ENCODE measurements at regions of chr19 and their contacts with region 1.

Region 1: GRCh38 chr19:18985257-18985656 is 44.2 kb upstream of the HOMER3 start:
- DNase-seq: no peak
- H3K4me3 Mint-ChIP-seq: no peak overlapping the region
- H3K27ac Mint-ChIP-seq: no peak overlapping the region
- H3K4me1 Mint-ChIP-seq: no peaks in the 10 kb centered on the region
- H3K27me3 Mint-ChIP-seq: no peaks in the 10 kb centered on the region
- CTCF ChIP-seq: no peak

Region 2: DNA sequence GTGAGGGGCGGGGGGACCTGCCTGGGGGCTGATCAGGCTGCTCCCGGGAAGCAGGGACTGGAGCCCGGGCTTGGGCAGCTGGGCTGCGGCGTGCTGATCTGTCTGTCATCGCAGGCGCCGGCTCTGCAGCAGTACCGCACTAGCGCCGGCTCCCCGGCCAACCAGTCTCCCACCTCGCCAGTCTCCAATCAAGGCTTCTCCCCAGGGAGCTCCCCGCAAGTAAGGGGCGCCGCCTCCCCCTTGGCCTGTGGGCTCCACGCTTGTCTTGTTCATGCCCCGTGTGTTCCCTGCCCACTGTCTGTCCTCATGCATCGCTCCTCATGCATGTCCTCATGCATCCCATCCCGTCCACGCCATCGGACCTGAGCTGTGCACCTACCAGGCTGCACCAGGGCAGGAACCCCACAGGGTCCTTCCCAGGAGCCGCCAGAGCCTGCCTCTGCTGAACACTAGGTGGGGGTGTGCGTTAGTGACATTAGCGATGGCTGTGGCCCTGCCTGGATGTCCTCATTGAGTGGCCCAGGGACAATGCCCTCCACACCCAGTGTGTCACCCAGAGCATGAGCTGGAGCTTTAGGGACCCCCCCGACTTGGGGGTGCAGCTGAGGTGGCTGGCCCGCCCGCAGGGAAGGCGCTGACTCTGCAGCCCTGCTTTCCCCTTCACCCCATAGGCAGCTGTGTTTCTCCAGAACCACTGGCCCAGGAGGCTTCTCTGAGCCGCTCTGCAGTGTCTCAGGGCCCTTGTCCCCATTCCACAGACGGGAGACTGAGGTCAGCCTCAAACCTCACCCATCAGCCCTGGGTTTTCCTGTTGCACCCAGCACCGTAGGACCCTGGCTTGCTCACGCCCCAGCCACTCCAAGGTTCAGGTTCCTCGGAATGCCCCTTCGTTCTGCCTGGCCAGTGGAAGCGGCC is 213.7 kb before region 1 on chr19:
- CTCF ChIA-PET with region 1: interaction called, 13 read pairs
- POLR2A ChIA-PET with region 1: no interaction called
- intact Hi-C with region 1: loop called (anchors 2 kb)
- DNase-seq: no peak
- H3K4me3 Mint-ChIP-seq: no peak overlapping the region
- H3K27ac Mint-ChIP-seq: no peak overlapping the region
- H3K4me1 Mint-ChIP-seq: peaks cover 38% of the 10 kb centered on the region
- H3K27me3 Mint-ChIP-seq: no peaks in the 10 kb centered on the region
- CTCF ChIP-seq: no peak

Region 3: GRCh38 chr19:18781885-18782527 is 203.3 kb before region 1 on chr19:
- CTCF ChIA-PET with region 1: no interaction called
- POLR2A ChIA-PET with region 1: no interaction called
- intact Hi-C with region 1: no loop called
- DNase-seq: no peak
- H3K4me3 Mint-ChIP-seq: no peak overlapping the region
- H3K27ac Mint-ChIP-seq: no peak overlapping the region
- H3K4me1 Mint-ChIP-seq: no peaks in the 10 kb centered on the region
- H3K27me3 Mint-ChIP-seq: no peaks in the 10 kb centered on the region
- CTCF ChIP-seq: no peak

Region 4: DNA sequence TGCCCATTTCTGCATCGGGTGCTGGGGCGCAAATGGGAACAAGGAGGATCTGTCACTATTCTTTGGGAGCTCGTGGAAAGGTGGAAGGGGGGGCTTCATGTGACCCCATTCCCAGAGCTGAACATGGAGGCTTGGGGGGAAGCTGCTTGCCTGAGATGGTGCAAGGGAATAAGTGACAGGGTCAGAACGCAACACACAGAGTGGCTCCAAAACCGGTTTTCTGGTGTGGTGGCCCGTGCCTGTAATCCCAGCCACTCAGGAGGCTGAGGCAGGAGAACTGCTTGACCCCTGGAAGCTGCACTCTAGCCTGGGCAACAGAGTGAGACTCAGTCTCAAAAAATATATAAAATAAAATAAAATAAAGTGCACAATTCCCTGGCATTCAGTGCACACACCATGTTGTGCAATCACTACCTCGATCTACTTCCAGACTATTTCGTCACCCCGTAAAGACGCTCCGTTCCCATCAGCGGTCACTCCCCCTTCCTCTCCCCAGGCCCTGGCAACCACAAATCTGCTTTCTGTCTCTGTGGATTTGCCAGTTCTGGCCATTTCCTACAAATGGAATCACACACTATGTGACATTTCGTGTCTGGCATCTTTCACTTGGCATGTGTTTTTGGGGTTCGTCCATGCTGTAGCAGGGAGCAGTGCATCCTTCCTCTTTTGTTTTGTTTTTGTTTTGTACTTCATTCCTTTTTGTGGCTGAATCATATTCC is 175.9 kb before region 1 on chr19:
- CTCF ChIA-PET with region 1: no interaction called
- POLR2A ChIA-PET with region 1: no interaction called
- intact Hi-C with region 1: no loop called
- DNase-seq: peak; percentile 91
- H3K4me3 Mint-ChIP-seq: peak overlapping the region; percentile 10
- H3K27ac Mint-ChIP-seq: peak overlapping the region; percentile 81
- H3K4me1 Mint-ChIP-seq: no peaks in the 10 kb centered on the region
- H3K27me3 Mint-ChIP-seq: no peaks in the 10 kb centered on the region
- CTCF ChIP-seq: no peak

Region 5: DNA sequence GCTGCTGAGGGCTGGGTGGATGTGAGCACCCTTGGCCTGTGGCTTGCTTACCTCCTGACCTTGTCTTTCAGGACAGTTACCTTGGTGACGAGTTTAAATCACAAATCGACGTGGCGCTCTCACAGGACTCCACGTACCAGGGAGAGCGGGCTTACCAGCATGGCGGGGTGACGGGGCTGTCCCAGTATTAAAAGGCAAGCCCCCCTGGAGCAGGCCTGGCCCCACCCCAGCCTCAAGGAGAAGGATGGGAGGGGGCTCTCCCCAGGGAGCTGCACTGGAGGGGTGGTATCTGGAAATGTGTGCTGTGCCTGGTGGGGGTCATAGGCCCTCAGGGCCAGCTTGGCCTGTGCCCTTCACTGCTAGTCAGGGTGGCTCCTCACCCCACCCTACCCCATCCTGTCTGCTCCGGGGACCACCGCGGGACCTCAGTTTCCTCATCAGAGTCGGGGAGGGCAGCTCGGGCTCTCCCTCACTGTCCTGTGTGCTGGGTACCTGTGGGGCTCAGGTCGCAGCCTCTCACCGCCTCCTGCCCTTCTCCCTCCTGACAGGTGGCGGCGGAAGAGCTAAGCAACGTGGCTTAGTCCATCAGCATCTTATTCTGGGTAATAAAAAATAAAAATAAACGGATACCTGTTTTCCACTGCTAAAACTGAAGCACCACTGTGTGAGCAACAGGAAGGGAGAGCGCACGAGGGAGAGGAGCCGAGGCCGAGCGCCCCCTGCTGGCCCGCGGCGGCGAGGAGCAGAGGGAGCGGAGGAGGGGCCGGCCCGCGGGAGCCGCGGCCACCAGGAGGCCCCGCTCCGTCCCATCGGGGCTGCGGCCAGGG is 119.1 kb before region 1 on chr19:
- CTCF ChIA-PET with region 1: interaction called, 13 read pairs
- POLR2A ChIA-PET with region 1: interaction called, 4 read pairs
- intact Hi-C with region 1: no loop called
- DNase-seq: peak; percentile 70
- H3K4me3 Mint-ChIP-seq: no peak overlapping the region
- H3K27ac Mint-ChIP-seq: no peak overlapping the region
- H3K4me1 Mint-ChIP-seq: no peaks in the 10 kb centered on the region
- H3K27me3 Mint-ChIP-seq: no peaks in the 10 kb centered on the region
- CTCF ChIP-seq: peak; percentile 97

Region 6: DNA sequence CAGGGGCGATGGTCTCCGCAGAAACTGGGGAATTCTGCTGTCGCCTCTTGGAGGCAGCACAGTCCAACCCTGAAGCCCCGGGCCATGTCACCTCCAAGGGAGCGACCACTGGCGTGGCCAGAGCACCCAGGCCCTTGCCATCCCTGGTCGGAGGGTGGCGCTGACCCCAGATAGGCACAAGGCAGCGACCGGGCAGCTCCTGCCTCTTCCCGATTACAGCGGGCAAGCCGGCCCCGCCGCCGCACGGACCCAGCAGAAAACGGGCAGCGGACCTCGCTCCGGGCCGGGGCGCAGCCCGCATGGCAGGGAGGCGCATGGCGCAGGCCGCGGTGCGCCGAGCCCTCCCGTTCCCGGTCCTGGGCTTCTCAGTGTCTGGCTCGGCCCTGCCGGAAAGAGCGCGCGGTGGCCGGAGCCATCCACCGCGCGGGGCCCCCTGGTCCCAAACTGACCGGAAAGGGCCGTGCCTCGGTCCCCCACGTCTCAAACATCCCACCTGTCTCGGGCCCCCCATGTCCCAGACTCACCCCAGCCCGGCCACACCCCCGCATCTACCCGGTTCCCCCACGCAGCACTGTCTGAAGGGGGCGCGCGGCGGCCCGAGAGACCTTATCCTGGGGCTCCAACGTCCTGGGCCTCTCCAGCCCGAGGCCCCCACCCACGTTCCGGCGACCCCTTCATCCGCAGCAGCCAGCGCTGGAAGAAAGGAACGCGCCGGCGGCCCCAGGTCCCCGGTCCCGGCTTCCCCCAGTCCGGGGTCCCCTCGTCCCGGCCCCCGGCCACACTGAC is 90.0 kb before region 1 on chr19:
- CTCF ChIA-PET with region 1: interaction called, 6 read pairs
- POLR2A ChIA-PET with region 1: no interaction called
- intact Hi-C with region 1: loop called (anchors 1 kb)
- DNase-seq: peak; percentile 44
- H3K4me3 Mint-ChIP-seq: peak overlapping the region; percentile 21
- H3K27ac Mint-ChIP-seq: no peak overlapping the region
- H3K4me1 Mint-ChIP-seq: no peaks in the 10 kb centered on the region
- H3K27me3 Mint-ChIP-seq: peaks cover 37% of the 10 kb centered on the region
- CTCF ChIP-seq: no peak

Region 7: DNA sequence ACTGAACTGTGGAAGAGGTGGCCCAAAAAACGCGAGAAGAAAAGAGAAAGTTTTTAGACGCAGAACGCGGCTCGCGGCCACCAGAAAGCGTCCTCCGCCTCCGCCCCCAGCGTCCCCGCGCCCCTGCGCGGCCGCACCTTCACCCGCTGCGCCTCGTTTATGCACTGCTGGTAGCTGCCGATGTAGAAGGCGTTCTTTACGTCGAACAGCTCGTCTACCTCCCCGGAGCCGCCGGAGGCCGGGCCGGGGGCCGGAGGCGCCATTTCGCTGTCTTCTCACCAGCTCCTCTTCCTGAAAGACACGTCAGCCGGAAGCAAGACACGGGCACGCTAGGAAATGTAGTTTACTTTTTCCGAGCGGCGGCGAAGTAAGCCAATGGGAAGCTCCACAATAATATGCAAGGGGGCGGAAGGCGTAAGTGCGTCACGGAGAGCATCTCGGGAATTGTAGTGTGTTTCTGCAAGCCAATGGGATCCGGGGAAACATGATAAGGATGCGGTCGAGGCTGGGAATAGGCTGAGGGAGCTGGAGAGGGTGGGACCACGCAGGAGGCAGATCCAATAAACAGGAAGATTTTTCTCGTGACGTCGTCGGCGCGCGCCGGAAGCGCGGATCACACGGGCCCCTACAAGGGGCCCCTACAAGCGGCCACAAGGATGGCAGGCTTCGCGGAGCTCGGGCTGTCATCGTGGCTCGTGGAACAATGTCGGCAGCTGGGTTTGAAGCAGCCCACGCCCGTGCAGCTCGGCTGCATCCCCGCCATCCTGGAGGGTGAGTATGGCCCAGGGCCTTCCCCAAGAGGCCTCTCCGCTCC is 66.0 kb before region 1 on chr19 and contains the starts of genes COPE and DDX49:
- CTCF ChIA-PET with region 1: interaction called, 32 read pairs
- POLR2A ChIA-PET with region 1: interaction called, 34 read pairs
- intact Hi-C with region 1: loop called (anchors 1 kb)
- DNase-seq: peak; percentile 100
- H3K4me3 Mint-ChIP-seq: peak within 1 kb of the TSS; percentile 89
- H3K27ac Mint-ChIP-seq: peak within 1 kb of the TSS; percentile 91
- H3K4me1 Mint-ChIP-seq: peaks cover 14% of the 10 kb centered on the region
- H3K27me3 Mint-ChIP-seq: no peaks in the 10 kb centered on the region
- CTCF ChIP-seq: no peak
- total RNA-seq, gene COPE: 310 and 456 TPM in 2 replicates
- total RNA-seq, gene DDX49: 87.7 and 98.8 TPM in 2 replicates

Region 8: DNA sequence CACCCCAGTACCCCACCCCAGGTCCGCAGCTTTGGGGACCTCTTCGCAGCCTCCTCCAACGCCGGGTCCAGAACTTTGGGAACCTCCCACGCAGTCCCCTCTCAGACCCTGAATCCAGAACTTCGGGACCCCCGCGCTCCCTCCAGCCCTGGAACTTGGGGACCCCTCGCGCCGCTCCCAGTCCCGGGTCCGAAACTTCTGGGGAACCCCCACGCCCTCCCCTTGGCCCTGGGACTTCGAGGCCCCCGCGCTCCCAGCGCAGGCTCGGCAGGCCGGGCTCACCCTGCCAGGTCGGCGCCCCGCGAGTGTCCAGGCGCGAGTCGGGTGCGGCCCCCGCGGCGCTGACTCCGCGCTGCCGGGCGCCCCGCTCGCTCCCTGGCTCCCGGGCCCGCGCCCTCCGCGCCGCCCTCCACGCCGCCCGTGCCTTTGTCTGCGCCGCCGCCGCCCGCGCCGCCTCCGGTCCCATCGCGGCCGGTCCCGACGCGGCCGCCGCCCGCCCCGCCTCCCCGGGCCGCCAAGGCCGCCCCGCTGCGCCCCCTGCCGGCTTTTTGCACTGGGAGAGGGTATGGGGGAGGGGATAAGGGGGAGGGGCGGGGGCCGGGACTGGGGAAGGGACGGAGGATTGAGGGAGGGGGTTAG is 44.4 kb before region 1 on chr19 and contains the start of gene HOMER3:
- CTCF ChIA-PET with region 1: interaction called, 17 read pairs
- POLR2A ChIA-PET with region 1: interaction called, 4 read pairs
- intact Hi-C with region 1: loop called (anchors 1 kb)
- DNase-seq: peak; percentile 74
- H3K4me3 Mint-ChIP-seq: peak within 1 kb of the TSS; percentile 94
- H3K27ac Mint-ChIP-seq: peak within 1 kb of the TSS; percentile 93
- H3K4me1 Mint-ChIP-seq: peaks cover 17% of the 10 kb centered on the region
- H3K27me3 Mint-ChIP-seq: no peaks in the 10 kb centered on the region
- CTCF ChIP-seq: peak; percentile 20
- total RNA-seq, gene HOMER3: 57.9 and 58.9 TPM in 2 replicates

Region 9: GRCh38 chr19:18995804-18996241 is 10.6 kb after region 1 on chr19:
- CTCF ChIA-PET with region 1: interaction called, 21 read pairs
- POLR2A ChIA-PET with region 1: no interaction called
- intact Hi-C with region 1: no loop called
- DNase-seq: peak; percentile 61
- H3K4me3 Mint-ChIP-seq: no peak overlapping the region
- H3K27ac Mint-ChIP-seq: no peak overlapping the region
- H3K4me1 Mint-ChIP-seq: peaks cover 16% of the 10 kb centered on the region
- H3K27me3 Mint-ChIP-seq: no peaks in the 10 kb centered on the region
- CTCF ChIP-seq: peak; percentile 28

Region 10: DNA sequence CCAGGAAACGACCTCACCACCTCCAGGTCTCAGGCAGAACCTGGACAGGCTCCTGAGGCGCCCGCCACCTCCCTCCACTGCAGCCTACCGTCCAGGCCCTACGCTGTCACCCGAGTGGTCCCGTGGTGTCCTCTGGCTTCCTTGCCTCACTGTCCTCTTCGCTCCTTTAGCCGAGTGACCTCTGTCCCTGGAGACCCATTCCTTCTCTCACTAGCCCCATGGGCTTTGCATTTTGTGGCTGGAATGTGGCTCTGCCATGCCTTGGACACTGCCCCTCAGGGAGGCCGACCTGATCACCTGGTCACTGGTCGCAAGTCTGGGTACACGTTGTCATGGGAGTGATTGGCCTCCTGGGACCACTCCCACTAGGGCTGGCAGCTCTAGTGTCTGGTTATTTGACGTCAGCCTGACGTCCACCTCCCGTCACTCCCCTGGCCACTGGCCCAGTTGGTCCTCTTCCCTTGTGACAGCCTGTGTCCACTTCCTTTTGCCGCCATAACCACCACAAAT is 96.4 kb after region 1 on chr19:
- CTCF ChIA-PET with region 1: no interaction called
- POLR2A ChIA-PET with region 1: no interaction called
- intact Hi-C with region 1: no loop called
- DNase-seq: no peak
- H3K4me3 Mint-ChIP-seq: no peak overlapping the region
- H3K27ac Mint-ChIP-seq: no peak overlapping the region
- H3K4me1 Mint-ChIP-seq: no peaks in the 10 kb centered on the region
- H3K27me3 Mint-ChIP-seq: no peaks in the 10 kb centered on the region
- CTCF ChIP-seq: no peak